Heart right ventricle (tissue), 16 donors: ENCODE measurements at regions of chr1 and their contacts with region 1.

Region 1: DNA sequence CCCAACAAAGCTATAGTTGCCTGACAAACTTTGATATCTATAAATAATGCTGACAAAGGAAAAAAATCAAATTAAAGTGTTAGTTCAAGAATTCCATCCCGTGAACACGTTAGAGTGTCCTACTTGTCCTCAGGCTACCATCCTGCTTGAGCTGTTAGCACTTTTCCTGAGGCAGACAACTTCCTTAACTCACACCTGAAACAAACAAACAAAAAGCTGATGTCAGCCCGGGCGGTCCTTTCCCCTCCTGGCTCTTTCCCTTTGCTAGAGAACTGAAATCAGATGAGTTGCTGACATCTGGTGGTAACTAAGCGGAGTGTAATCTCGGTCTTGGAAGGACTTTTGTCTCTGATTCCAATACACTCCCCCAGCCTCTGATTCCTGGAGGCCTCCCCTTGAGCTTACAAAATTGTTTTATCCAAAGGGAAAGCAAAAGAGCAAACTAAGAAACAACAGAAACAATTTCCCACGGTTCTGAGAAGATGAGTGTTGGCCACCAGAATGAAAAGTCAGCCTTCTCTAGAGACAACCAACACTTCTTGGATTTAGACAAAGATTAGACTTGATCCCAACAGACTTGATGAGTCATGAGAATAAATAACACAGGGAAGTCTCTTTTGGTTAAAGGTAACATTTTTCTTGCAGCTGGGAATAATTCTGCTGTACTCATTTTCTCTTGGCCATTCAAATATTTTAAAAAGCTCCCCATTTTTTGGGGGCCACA is 135.4 kb downstream of the PROX1 start:
- DNase-seq: peak in 1 of 2 donors; percentile 42
- ATAC-seq: peak; percentile 53 to 87 (median 86)
- H3K4me3 ChIP-seq: no peak overlapping the region
- H3K27ac ChIP-seq: no peak overlapping the region
- H3K4me1 ChIP-seq: peaks cover 0 to 7% (median 0%) of the 10 kb centered on the region in 9 donors
- H3K27me3 ChIP-seq: no peaks in the 10 kb centered on the region
- CTCF ChIP-seq: peak; percentile 20 to 76 (median 62)

Region 2: DNA sequence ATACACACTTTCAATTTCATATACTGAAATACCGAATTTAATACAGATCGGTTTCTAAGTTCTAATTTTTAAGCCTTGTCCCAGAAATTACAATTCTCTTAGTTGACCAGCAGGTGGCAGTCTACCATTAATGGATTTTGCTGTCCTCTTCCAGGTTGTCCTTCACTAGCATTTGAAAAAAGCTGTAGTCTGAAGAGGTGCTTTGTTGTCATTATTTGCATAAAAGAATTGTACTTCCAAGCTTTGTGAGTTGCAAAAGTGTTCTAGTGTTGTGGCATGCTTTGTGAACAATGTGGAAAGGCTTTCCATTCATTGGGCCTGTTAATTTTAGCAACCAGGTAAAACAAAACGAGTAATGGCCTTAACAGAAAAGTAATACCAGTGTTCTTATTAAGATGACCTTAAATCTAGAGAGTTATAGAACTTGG is 878.5 kb before region 1 on chr1:
- intact Hi-C with region 1: loop called in 8 of 10 experiments (anchors 2 to 10 kb)
- DNase-seq: peak in 1 of 2 donors; percentile 33
- ATAC-seq: no peak
- H3K4me3 ChIP-seq: no peak overlapping the region
- H3K27ac ChIP-seq: no peak overlapping the region
- H3K4me1 ChIP-seq: no peaks in the 10 kb centered on the region
- H3K27me3 ChIP-seq: no peaks in the 10 kb centered on the region
- CTCF ChIP-seq: peak; percentile 67 to 87 (median 79)

Region 3: GRCh38 chr1:213374369-213374768 is 748.9 kb before region 1 on chr1:
- intact Hi-C with region 1: loop called in 8 of 10 experiments (anchors 5 to 10 kb)
- DNase-seq: peak; percentile 37 to 65
- ATAC-seq: peak in 7 of 8 donors; percentile 59 to 80 (median 68)
- H3K4me3 ChIP-seq: no peak overlapping the region
- H3K27ac ChIP-seq: no peak overlapping the region
- H3K4me1 ChIP-seq: no peaks in the 10 kb centered on the region
- H3K27me3 ChIP-seq: peaks cover 0 to 3% (median 0%) of the 10 kb centered on the region in 7 donors
- CTCF ChIP-seq: peak; percentile 59 to 89 (median 82)

Region 4: GRCh38 chr1:213987927-213988506 is 135.2 kb before region 1 on chr1 and contains the start of gene PROX1:
- intact Hi-C with region 1: loop called in 8 of 10 experiments (anchors 5 to 10 kb)
- DNase-seq: no peak
- ATAC-seq: peak; percentile 18 to 88 (median 82)
- H3K4me3 ChIP-seq: peak within 1 kb of the TSS; percentile 49 to 70 (median 66)
- H3K27ac ChIP-seq: peak within 1 kb of the TSS; percentile 42 to 93 (median 85)
- H3K4me1 ChIP-seq: peaks cover 0 to 47% (median 19%) of the 10 kb centered on the region in 9 donors
- H3K27me3 ChIP-seq: peaks cover 5 to 94% (median 44%) of the 10 kb centered on the region in 7 donors
- CTCF ChIP-seq: no peak
- total RNA-seq, gene PROX1: 52.6 to 132 (median 116) TPM

Region 5: DNA sequence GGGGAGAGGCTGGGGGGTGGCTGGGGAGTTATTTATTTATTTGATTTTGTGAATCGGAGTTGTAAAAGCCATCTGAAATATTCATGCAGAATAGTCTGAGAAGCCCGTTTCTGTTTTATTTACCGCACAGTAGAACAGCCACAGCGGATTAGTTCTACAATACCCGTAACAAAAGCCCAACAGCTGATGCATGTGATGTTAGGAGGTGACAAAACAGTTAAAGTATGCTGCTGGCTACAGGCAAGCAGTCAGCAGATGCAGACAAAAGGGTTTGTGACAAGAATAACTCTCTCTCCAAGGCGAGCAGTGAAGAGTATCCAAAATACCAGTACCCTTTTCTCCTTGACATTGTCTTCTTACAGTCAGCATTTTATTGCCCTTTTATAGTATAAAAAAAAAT is 93.4 kb before region 1 on chr1:
- intact Hi-C with region 1: loop called in 1 of 10 experiments (anchors 5 kb)
- DNase-seq: peak in 1 of 2 donors; percentile 42
- ATAC-seq: peak; percentile 74 to 90 (median 84)
- H3K4me3 ChIP-seq: no peak overlapping the region
- H3K27ac ChIP-seq: peak overlapping the region; percentile 74 to 97 (median 90)
- H3K4me1 ChIP-seq: peaks cover 0 to 48% (median 18%) of the 10 kb centered on the region in 9 donors
- H3K27me3 ChIP-seq: no peaks in the 10 kb centered on the region
- CTCF ChIP-seq: no peak